Activated CD8-positive, alpha-beta T cell treated with anti-CD3 and anti-CD28 coated beads for 36 hours (primary cell): ENCODE measurements at regions of chr19 and their contacts with region 1.

Region 1: GRCh38 chr19:18281082-18282020 is at the start of gene JUND:
- DNase-seq: peak; percentile 98
- ATAC-seq: peak; percentile 69
- H3K4me3 Mint-ChIP-seq: peak within 1 kb of the TSS; percentile 92
- H3K27ac Mint-ChIP-seq: peak within 1 kb of the TSS; percentile 100
- H3K4me1 Mint-ChIP-seq: peaks cover 37% of the 10 kb centered on the region
- H3K27me3 Mint-ChIP-seq: no peaks in the 10 kb centered on the region
- CTCF ChIP-seq: no peak
- total RNA-seq, gene JUND: 527 to 530 TPM

Region 2: DNA sequence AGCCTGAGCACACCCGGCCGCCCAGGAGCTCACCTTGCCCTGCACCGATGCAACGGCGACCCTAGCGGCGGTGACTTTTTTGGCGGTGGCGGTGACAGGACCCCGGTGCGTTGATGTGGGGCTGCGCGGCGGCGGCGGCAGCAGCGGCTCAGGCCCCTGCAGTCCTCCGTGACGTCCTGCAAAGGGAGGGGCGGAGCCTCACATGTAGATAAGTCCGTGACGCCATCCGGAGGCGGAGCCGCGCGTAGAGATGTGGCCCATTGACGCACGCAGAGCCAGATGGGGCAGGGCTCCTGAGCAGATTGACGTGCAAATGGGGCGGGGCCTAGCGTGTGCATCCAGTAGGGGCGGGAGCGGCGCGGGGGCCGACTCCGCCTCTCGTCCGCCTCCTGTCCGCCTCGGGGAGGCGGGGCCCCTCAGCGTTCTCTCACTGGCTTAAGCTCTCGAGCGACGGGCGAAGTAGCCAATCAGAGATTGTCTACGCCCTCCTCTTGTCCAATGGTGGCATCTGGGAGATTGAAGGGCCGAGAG is 77.4 kb before region 1 on chr19 and contains the start of gene RAB3A:
- CTCF ChIA-PET with region 1: interaction called, 20 read pairs
- POLR2A ChIA-PET with region 1: interaction called, 20 read pairs
- intact Hi-C with region 1: no loop called
- DNase-seq: peak; percentile 100
- ATAC-seq: peak; percentile 93
- H3K4me3 Mint-ChIP-seq: peak within 1 kb of the TSS; percentile 98
- H3K27ac Mint-ChIP-seq: peak within 1 kb of the TSS; percentile 89
- H3K4me1 Mint-ChIP-seq: peaks cover 21% of the 10 kb centered on the region
- H3K27me3 Mint-ChIP-seq: peaks cover 6% of the 10 kb centered on the region
- CTCF ChIP-seq: no peak
- total RNA-seq, gene RAB3A: 8.9 to 11.3 TPM

Region 3: GRCh38 chr19:18269070-18269723 is 12.2 kb before region 1 on chr19:
- CTCF ChIA-PET with region 1: interaction called, 24 read pairs
- POLR2A ChIA-PET with region 1: interaction called, 6 read pairs
- intact Hi-C with region 1: no loop called
- DNase-seq: no peak
- ATAC-seq: no peak
- H3K4me3 Mint-ChIP-seq: no peak overlapping the region
- H3K27ac Mint-ChIP-seq: no peak overlapping the region
- H3K4me1 Mint-ChIP-seq: peaks cover 2% of the 10 kb centered on the region
- H3K27me3 Mint-ChIP-seq: no peaks in the 10 kb centered on the region
- CTCF ChIP-seq: no peak

Region 4: DNA sequence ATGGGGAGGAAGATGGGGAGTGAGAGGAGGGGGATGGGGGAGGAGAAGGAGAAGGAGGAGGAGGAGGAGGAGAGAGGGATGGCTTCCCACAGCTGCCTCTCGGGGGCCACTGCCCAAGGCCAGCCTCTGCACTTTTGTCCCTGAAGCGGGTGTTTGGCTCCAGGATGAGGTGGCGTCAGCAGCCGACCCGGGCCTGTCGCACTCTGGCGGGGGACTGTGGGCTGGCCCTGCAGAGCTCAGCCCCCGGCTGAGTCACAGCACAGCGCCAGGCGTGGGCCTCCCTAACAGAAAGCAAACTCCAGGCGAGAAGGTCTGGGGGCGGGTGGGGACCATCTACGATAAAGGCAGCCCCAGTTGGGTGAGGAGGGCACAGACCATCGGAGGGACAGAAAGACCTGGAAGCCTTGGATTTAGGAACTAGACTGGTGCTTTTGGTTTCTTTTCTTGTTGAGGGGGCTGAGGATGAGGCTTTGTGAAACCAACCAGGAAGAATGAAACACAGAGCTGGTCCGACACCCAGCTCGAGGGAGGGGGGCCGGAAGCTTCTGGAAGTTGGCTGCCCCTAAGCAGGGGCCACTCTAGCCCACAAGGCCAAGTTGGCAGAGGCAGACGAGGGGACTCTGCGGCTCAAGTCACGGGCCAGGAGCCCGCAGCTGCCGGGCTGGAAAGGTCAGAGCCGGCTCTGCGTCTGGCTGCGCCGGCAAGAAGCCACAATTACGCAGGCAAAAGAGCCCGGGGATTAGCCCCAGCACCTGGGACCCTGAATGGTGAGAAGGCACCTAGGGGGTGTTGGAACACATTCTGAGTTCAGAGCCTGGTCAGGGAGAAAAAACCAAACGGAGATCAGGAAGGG is 23.3 kb after region 1 on chr19:
- CTCF ChIA-PET with region 1: interaction called, 166 read pairs
- POLR2A ChIA-PET with region 1: interaction called, 592 read pairs
- intact Hi-C with region 1: loop called (anchors 2 kb)
- DNase-seq: peak; percentile 96
- ATAC-seq: peak; percentile 77
- H3K4me3 Mint-ChIP-seq: peak overlapping the region; percentile 92
- H3K27ac Mint-ChIP-seq: peak overlapping the region; percentile 96
- H3K4me1 Mint-ChIP-seq: peaks cover 40% of the 10 kb centered on the region
- H3K27me3 Mint-ChIP-seq: no peaks in the 10 kb centered on the region
- CTCF ChIP-seq: no peak

Region 5: DNA sequence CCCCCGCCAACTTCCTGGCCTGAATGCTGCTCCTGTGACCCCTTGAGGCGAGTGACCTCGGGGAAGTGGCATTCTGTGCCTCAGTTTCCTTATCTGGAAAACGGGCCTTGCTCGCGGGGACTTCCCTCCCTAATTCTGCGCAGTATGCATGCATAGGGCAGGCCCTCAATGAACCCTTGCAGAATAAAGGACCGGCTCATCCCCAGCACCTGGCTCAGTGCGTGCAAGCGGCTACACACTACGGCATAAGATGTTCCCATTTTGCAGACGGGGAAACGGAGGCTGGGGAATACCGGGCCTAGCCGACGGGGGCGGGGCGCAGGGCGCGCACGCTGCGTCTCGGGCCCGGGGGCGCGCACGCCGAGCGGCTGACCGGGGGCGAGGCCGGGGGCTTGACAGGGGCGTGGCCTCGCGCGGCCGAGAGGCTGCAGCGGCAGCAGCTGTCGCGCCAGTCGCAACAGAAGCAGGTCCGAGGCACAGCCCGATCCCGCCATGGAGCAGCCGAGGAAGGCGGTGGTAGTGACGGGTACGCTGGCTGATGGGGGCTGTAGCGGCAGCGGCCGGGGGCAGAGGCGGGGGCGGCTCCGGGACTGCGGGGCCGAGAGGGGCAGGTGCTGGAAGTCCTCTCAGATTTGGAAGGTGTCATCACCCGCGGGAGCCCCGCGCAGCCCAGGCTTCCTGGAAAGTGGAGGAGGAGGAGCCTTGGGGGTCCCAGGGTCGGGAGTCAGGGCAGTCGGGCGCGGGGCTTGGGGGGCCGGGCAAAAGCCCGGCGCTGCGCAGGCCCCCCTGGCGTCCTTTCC is 59.0 kb after region 1 on chr19 and contains the start of gene PGPEP1:
- CTCF ChIA-PET with region 1: interaction called, 27 read pairs
- POLR2A ChIA-PET with region 1: interaction called, 9 read pairs
- intact Hi-C with region 1: no loop called
- DNase-seq: peak; percentile 63
- ATAC-seq: peak; percentile 60
- H3K4me3 Mint-ChIP-seq: peak within 1 kb of the TSS; percentile 70
- H3K27ac Mint-ChIP-seq: peak within 1 kb of the TSS; percentile 84
- H3K4me1 Mint-ChIP-seq: peaks cover 16% of the 10 kb centered on the region
- H3K27me3 Mint-ChIP-seq: no peaks in the 10 kb centered on the region
- CTCF ChIP-seq: no peak
- total RNA-seq, gene PGPEP1: 21.7 to 23.9 TPM

Region 6: DNA sequence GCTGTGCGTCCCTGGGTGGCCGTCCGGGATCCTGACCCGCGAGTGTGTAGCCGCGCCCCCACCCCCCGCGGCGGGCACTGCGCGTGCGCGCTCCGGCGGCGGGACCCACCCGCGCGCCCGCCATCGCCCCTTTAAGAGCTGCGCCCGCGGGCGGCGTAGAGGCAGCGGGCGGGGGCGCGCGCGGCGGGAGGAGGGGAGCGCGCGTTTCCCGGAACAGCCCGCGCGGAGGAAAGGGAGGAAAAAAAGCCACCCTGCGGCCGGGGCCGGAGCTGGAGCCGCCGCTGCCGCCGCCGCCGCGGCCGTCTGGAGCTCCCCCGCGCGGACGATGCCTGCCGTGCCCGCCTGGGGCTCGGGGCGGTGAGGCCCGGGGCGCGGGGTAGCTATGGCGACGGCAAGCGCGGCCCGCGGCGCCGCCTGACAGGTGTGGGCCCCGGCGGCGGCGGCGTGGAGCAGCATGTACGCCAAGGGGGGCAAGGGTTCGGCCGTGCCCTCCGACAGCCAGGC is 137.9 kb after region 1 on chr19 and contains the start of gene SSBP4:
- CTCF ChIA-PET with region 1: interaction called, 62 read pairs
- POLR2A ChIA-PET with region 1: interaction called, 37 read pairs
- intact Hi-C with region 1: no loop called
- DNase-seq: peak; percentile 72
- ATAC-seq: peak; percentile 38
- H3K4me3 Mint-ChIP-seq: peak within 1 kb of the TSS; percentile 86
- H3K27ac Mint-ChIP-seq: peak within 1 kb of the TSS; percentile 79
- H3K4me1 Mint-ChIP-seq: peaks cover 78% of the 10 kb centered on the region
- H3K27me3 Mint-ChIP-seq: peaks cover 11% of the 10 kb centered on the region
- CTCF ChIP-seq: no peak
- total RNA-seq, gene SSBP4: 98.2 to 102 TPM